ENCODE measurements at regions of chr11 and their contacts with region 1.

Region 1: GRCh38 chr11:81888391-81888790 is 845.3 kb downstream of the FAM181B start:
- DNase-seq: no peak
- ATAC-seq: no peak
- H3K4me3 ChIP-seq: no peak overlapping the region
- H3K4me3 Mint-ChIP-seq: no peak overlapping the region
- H3K27ac ChIP-seq: no peak overlapping the region
- H3K27ac Mint-ChIP-seq: no peak overlapping the region
- H3K4me1 ChIP-seq: no peaks in the 10 kb centered on the region
- H3K4me1 Mint-ChIP-seq: no peaks in the 10 kb centered on the region
- H3K27me3 ChIP-seq: no peaks in the 10 kb centered on the region
- H3K27me3 Mint-ChIP-seq: no peaks in the 10 kb centered on the region
- CTCF ChIP-seq: no peak

Region 2: GRCh38 chr11:81829976-81830375 is 58.4 kb before region 1 on chr11:
- CTCF ChIA-PET with region 1: no interaction called
- POLR2A ChIA-PET with region 1: no interaction called
- intact Hi-C with region 1: loop called in 1 of 2 experiments (anchors 5 kb)
- DNase-seq: no peak
- ATAC-seq: no peak
- H3K4me3 ChIP-seq: no peak overlapping the region
- H3K4me3 Mint-ChIP-seq: no peak overlapping the region
- H3K27ac ChIP-seq: no peak overlapping the region
- H3K27ac Mint-ChIP-seq: no peak overlapping the region
- H3K4me1 ChIP-seq: no peaks in the 10 kb centered on the region
- H3K4me1 Mint-ChIP-seq: peaks cover 2% of the 10 kb centered on the region
- H3K27me3 ChIP-seq: no peaks in the 10 kb centered on the region
- H3K27me3 Mint-ChIP-seq: no peaks in the 10 kb centered on the region
- CTCF ChIP-seq: no peak

Region 3: GRCh38 chr11:81874635-81875034 is 13.8 kb before region 1 on chr11:
- CTCF ChIA-PET with region 1: no interaction called
- POLR2A ChIA-PET with region 1: interaction called, 6 read pairs
- intact Hi-C with region 1: loop called in 1 of 2 experiments (anchors 2 kb)
- DNase-seq: peak in 3 of 9 experiments; percentile 39 to 60 (median 45)
- ATAC-seq: peak; percentile 12
- H3K4me3 ChIP-seq: no peak overlapping the region
- H3K4me3 Mint-ChIP-seq: peak overlapping the region; percentile 30
- H3K27ac ChIP-seq: peak overlapping the region in 1 of 2 experiments; percentile 38
- H3K27ac Mint-ChIP-seq: peak overlapping the region; percentile 60
- H3K4me1 ChIP-seq: peaks cover 38% of the 10 kb centered on the region
- H3K4me1 Mint-ChIP-seq: peaks cover 44% of the 10 kb centered on the region
- H3K27me3 ChIP-seq: no peaks in the 10 kb centered on the region
- H3K27me3 Mint-ChIP-seq: no peaks in the 10 kb centered on the region
- CTCF ChIP-seq: no peak